ENCODE measurements at regions of chr11 and their contacts with region 1.

Region 1: DNA sequence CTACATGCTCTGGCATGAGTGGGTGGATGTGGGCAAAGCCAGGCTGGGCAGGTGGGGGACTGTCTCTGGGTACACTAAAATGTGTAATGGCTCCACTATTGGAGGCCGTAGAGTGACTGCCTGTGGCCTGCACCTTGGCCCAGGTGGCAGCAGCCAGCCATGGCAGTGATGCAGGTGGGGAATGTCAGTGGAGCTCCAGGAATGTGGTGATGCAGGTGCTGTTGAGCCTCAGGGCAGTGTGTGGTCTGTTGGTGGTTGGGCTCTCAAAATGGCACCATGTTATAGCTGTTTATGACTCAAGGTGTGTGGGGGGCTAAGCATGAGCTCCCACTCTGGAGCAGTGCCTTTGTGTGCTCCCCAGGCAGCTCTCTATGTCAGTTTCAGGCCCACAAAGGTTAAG is 40.1 kb upstream of the CCDC90B start:
- DNase-seq: no peak
- ATAC-seq: no peak

Region 2: GRCh38 chr11:83956110-83956697 is 629.9 kb after region 1 on chr11:
- intact Hi-C with region 1: loop called (anchors 5 kb)
- DNase-seq: no peak
- ATAC-seq: peak; percentile 13